Activated B cell treated with CpG ODN at 0.5 μM for 24 hours (primary cell): ENCODE measurements at regions of chr15 and their contacts with region 1.

Region 1: GRCh38 chr15:88897456-88898194 is 2.3 kb upstream of the HAPLN3 start:
- DNase-seq: no peak
- ATAC-seq: peak; percentile 74
- H3K4me3 Mint-ChIP-seq: no peak overlapping the region
- H3K27ac Mint-ChIP-seq: no peak overlapping the region
- H3K4me1 Mint-ChIP-seq: peaks cover 16% of the 10 kb centered on the region
- H3K27me3 Mint-ChIP-seq: peaks cover 6% of the 10 kb centered on the region
- CTCF ChIP-seq: no peak

Region 2: DNA sequence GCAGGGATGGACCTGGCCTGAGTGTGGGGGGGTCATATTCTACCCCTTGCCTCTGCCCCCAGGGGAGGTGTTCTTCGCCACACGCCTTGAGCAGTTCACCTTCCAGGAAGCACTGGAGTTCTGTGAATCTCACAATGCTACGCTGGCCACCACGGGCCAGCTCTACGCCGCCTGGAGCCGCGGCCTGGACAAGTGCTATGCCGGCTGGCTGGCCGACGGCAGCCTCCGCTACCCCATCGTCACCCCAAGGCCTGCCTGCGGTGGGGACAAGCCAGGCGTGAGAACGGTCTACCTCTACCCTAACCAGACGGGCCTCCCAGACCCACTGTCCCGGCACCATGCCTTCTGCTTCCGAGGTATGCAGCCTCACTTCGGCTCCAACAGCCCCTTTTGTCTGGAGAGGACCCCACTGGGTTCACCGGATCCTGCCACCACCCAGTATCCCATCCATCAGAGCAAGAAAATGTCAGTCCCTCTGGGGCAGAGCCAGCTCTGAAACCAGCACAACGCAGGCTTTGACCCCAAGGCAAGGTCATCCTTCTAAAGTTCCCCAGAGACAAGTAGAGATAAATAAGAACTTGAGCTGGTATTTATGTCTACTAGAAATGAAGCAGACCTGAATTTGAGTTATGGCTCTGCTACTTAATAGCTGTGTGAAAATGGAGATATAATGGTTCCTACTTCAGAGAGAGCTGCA is 48.1 kb before region 1 on chr15:
- CTCF ChIA-PET with region 1: no interaction called
- POLR2A ChIA-PET with region 1: no interaction called
- intact Hi-C with region 1: no loop called
- DNase-seq: no peak
- ATAC-seq: no peak
- H3K4me3 Mint-ChIP-seq: no peak overlapping the region
- H3K27ac Mint-ChIP-seq: no peak overlapping the region
- H3K4me1 Mint-ChIP-seq: no peaks in the 10 kb centered on the region
- H3K27me3 Mint-ChIP-seq: peaks cover 11% of the 10 kb centered on the region
- CTCF ChIP-seq: no peak

Region 3: DNA sequence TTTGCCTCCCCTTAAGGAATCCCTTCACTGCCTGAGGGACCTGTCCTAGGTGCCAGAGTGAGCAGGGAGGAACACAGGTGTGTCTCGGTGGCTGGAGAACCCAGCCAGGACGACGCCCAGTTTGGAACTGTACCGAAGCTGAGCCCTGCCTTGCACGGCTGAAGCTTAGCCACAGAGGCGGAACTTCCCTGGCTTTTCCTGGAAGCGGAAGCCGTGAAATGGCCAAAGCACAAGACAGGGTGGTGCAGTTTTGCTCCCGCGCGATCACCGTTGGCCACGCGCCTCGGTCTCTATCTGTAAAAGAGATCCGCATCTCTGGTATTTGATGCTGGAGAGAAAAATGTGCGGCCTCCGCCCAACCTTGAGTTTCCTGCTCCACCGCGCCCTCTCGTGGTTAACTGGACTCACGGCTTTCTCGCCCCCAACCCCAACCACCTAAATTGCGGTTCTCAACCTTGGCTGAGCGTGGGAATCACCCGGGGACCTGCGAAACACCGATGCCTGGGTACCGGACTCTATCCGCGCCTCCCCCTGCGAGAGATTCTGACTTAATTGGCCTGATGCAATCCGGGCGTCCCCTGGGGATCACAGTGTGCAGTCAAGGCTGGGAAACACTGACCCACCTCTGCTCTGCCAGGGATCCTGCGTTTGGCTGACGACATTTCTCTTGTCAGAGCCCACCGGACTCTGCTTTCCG is 119.9 kb after region 1 on chr15:
- CTCF ChIA-PET with region 1: no interaction called
- POLR2A ChIA-PET with region 1: no interaction called
- intact Hi-C with region 1: loop called (anchors 2 kb)
- DNase-seq: peak; percentile 48
- ATAC-seq: peak; percentile 58
- H3K4me3 Mint-ChIP-seq: peak overlapping the region; percentile 44
- H3K27ac Mint-ChIP-seq: no peak overlapping the region
- H3K4me1 Mint-ChIP-seq: peaks cover 8% of the 10 kb centered on the region
- H3K27me3 Mint-ChIP-seq: peaks cover 32% of the 10 kb centered on the region
- CTCF ChIP-seq: no peak

Region 4: DNA sequence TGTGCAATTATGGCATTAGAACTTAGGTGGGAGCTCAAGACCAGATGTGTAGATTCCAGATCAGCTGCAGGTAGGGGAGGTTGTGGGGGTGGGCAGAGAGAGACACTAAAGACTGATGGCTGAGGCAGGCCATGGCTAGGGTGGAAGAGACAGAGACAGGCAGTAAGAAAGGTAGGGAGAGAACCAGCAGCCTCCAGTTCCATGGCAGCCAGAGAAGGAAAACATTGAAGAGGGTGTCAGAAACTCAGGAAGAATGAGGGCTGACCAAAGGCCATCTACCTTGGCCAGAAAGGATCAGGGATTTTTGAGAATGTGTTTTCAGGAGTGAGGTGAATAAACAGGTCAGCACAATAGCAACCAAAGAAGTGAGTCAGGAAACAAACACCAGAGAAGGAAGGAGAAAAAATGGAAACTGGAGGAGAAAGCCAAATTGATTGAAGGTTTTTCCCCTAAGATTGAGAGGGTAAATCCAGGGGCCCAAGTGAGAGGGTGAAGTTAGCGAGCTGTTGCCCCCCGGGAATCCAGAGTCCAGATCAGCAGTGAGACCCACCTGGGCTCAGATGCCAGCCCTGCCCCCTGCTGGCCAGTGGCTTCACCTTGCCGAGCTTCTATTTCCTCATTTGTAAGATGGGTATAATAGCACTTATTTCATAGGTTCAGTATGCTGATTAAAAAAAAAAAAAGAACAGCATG is 231.6 kb after region 1 on chr15:
- CTCF ChIA-PET with region 1: no interaction called
- POLR2A ChIA-PET with region 1: no interaction called
- intact Hi-C with region 1: loop called (anchors 1 kb)
- DNase-seq: peak; percentile 45
- ATAC-seq: peak; percentile 64
- H3K4me3 Mint-ChIP-seq: no peak overlapping the region
- H3K27ac Mint-ChIP-seq: no peak overlapping the region
- H3K4me1 Mint-ChIP-seq: peaks cover 14% of the 10 kb centered on the region
- H3K27me3 Mint-ChIP-seq: no peaks in the 10 kb centered on the region
- CTCF ChIP-seq: peak; percentile 60

Region 5: DNA sequence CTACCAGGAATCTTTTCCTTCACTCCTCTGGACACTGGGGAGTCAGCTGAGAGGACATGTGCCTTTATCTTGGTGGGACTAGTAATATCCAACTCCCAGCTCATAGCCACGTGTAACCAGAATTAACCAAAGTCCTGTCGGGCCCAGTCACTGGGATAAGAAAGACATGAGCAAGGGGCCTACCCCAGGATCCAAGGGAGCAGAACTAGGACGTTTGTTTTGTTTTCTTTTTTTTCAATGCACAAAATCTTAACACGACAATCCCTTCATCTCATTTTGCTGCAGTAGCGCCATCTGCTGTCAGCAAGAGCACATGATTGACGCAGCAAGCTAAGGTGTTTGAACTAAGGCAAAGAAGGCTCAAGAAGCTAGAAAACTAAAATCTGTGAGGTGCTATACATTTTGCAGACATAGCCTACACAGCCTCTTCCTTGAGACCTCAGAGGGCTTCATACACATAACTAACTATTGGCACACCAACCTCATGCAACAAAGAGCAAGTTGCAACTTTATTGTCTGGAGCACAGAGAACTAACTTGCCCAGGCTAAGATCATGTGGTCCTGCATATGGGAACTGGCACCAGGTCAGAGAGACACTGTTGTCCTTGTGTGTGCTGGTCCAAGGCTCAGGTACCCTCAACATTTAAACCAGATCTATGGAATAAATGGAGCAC is 280.1 kb after region 1 on chr15:
- CTCF ChIA-PET with region 1: interaction called, 8 read pairs
- POLR2A ChIA-PET with region 1: no interaction called
- intact Hi-C with region 1: loop called (anchors 2 kb)
- DNase-seq: no peak
- ATAC-seq: no peak
- H3K4me3 Mint-ChIP-seq: no peak overlapping the region
- H3K27ac Mint-ChIP-seq: no peak overlapping the region
- H3K4me1 Mint-ChIP-seq: peaks cover 2% of the 10 kb centered on the region
- H3K27me3 Mint-ChIP-seq: no peaks in the 10 kb centered on the region
- CTCF ChIP-seq: no peak